CD8-positive, alpha-beta memory T cell (primary cell): ENCODE measurements at regions of chr2 and their contacts with region 1.

Region 1: DNA sequence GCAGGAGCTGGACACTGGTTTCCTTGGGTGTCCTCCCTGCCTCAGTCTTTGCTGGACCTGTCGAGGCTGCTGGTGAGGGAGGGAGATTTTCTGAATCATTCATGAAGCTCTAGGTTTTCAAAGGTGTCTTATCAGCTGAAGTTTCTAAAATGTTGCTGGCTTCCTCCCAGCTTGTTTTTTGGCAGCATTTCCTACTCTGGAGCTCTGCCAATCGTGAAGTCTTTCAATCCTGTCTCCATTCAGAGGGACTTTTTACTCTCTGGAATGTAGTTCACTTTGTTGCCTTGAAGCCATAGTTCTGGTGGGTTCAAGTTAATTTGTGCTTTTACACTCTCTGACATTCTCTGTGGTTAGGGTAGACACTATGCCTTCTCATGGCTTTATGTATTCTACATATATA is 23.9 kb downstream of the SNTG2 start:
- DNase-seq: no peak
- H3K4me3 ChIP-seq: peak overlapping the region; percentile 35
- H3K4me3 Mint-ChIP-seq: peak overlapping the region; percentile 24 to 84 (median 60)
- H3K27ac ChIP-seq: no peak overlapping the region
- H3K27ac Mint-ChIP-seq: peak overlapping the region; percentile 23 to 81 (median 44)
- H3K4me1 ChIP-seq: peaks cover 22% of the 10 kb centered on the region
- H3K4me1 Mint-ChIP-seq: peaks cover 24 to 64% (median 26%) of the 10 kb centered on the region in 3 donors
- H3K27me3 ChIP-seq: no peaks in the 10 kb centered on the region
- H3K27me3 Mint-ChIP-seq: peaks cover 6 to 10% of the 10 kb centered on the region in 2 donors

Region 2: GRCh38 chr2:950080-950966 is 24.2 kb before region 1 on chr2 and contains the start of gene SNTG2:
- CTCF ChIA-PET with region 1: interaction called, 4 read pairs
- POLR2A ChIA-PET with region 1: interaction called, 11 read pairs
- DNase-seq: peak in 4 of 5 donors; percentile 20 to 72 (median 58)
- H3K4me3 ChIP-seq: peak within 1 kb of the TSS; percentile 25
- H3K4me3 Mint-ChIP-seq: peak within 1 kb of the TSS; percentile 71 to 89 (median 79)
- H3K27ac ChIP-seq: no peak within 1 kb of the TSS
- H3K27ac Mint-ChIP-seq: peak within 1 kb of the TSS in 1 of 8 donors; percentile 36
- H3K4me1 ChIP-seq: peaks cover 4% of the 10 kb centered on the region
- H3K4me1 Mint-ChIP-seq: peaks cover 24 to 55% (median 27%) of the 10 kb centered on the region in 3 donors
- H3K27me3 ChIP-seq: no peaks in the 10 kb centered on the region
- H3K27me3 Mint-ChIP-seq: peaks cover 21 to 30% of the 10 kb centered on the region in 2 donors
- total RNA-seq, gene SNTG2: 1.3 to 1.7 TPM